A673 (cell line): ENCODE measurements at regions of chr19 and their contacts with region 1.

Region 1: GRCh38 chr19:44570984-44571684 is 41.7 kb upstream of the CEACAM20 start:
- DNase-seq: peak; percentile 88
- H3K4me3 ChIP-seq: no peak overlapping the region
- H3K27ac ChIP-seq: no peak overlapping the region
- H3K4me1 ChIP-seq: peaks cover 7% of the 10 kb centered on the region
- H3K27me3 ChIP-seq: no peaks in the 10 kb centered on the region
- CTCF ChIP-seq: peak; percentile 85

Region 2: DNA sequence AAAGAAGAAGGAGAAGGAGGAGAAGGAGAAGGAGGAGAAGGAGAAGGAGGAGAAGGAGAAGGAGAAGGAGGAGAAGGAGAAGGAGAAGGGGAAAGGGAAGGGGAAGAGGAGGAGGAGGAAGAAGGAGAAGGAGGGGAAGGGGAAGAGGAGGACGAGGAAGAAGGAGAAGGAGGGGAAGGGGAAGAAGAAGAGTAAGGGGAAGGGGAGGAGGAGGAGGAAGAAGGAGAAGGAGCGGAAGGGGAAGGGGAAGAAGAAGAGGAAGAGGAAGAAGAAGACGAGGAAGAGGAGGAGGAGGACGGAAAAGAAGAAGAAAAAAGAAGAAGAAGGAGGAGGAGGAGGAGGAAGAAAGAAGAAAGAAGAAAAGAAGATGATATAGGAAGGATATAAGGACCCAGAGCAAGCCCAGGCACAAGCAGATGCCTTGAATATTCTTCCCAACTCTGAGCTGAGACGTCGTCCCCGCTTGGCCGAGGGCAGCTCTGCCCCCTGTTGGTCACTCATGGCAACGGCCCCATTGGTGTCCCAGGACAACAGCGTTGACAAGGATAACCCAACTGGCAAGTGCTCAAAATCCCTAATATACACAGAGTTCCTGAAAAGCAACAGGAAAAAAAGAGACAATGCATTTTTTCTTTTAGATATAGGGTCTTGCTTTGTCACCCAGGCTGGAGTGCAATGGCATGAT is 11.6 kb after region 1 on chr19:
- CTCF ChIA-PET with region 1: interaction called, 12 read pairs
- POLR2A ChIA-PET with region 1: no interaction called
- intact Hi-C with region 1: no loop called
- DNase-seq: peak; percentile 66
- H3K4me3 ChIP-seq: no peak overlapping the region
- H3K27ac ChIP-seq: no peak overlapping the region
- H3K4me1 ChIP-seq: no peaks in the 10 kb centered on the region
- H3K27me3 ChIP-seq: no peaks in the 10 kb centered on the region
- CTCF ChIP-seq: peak; percentile 87

Region 3: GRCh38 chr19:44657211-44657921 is 86.2 kb after region 1 on chr19:
- CTCF ChIA-PET with region 1: interaction called, 38 read pairs
- POLR2A ChIA-PET with region 1: no interaction called
- intact Hi-C with region 1: loop called (anchors 1 kb)
- DNase-seq: peak; percentile 85
- H3K4me3 ChIP-seq: no peak overlapping the region
- H3K27ac ChIP-seq: no peak overlapping the region
- H3K4me1 ChIP-seq: peaks cover 4% of the 10 kb centered on the region
- H3K27me3 ChIP-seq: no peaks in the 10 kb centered on the region
- CTCF ChIP-seq: peak; percentile 95